OCI-LY7 (cell line): ENCODE measurements at regions of chr12 and their contacts with region 1.

Region 1: DNA sequence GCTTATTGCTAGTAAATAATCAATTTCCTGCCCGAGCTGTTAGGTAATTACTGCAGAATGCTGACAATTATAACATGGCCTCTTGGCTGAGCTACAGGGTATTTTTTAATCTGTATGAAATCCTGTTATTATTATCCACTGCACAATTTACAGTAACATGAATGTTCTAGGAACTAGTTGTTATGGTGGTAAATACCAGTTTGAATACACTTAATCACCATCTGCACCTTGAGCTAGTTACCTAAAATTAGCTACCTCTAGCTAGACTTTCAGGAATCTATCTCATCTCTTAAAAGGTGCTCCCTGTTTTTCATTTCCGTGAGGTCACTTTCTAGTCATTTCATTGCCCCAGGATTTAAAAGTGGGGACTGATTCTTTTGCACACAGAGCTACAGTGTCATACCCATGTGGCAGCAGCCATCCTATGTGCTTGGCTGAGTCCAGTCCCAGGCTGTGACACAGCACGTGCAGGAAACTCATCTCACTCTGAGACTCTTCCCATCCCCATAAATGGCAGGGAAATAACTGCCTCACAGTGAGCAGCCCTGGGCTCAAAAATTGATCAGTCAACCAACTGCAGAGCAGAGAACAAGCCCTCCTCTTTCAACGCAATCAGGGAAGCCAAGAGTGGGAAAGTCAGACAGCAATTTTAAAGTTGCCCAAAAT is 37.6 kb downstream of the DCP1B start:
- DNase-seq: no peak
- H3K4me3 ChIP-seq: no peak overlapping the region
- H3K27ac ChIP-seq: no peak overlapping the region
- H3K4me1 ChIP-seq: no peaks in the 10 kb centered on the region
- CTCF ChIP-seq: no peak

Region 2: DNA sequence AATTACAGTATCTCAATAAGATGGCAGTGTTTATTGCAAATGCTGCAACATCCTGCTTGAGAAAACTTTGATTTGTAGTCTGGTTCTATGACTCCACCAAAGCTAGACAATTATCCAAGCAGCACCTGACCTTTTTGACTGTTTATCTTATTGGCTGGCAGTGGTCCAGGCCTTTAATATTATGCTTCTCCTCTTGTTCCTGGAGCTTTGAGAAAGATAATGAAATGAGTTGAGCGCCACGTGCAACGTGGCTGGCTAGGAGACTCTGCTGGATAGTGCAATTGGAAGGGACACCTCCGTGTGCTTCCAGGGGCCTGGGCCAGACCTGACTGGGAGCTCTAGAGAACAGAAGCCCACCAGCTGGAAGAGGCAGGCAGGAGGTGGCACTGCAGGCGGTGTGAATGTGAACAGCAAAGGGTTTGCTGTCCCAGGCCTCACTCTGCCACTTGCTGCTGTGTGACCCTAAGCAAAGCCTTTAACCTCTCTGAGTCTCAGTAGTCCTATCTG is 435.4 kb after region 1 on chr12:
- CTCF ChIA-PET with region 1: no interaction called
- POLR2A ChIA-PET with region 1: no interaction called
- intact Hi-C with region 1: loop called (anchors 5 kb)
- DNase-seq: no peak
- H3K4me3 ChIP-seq: no peak overlapping the region
- H3K27ac ChIP-seq: no peak overlapping the region
- H3K4me1 ChIP-seq: no peaks in the 10 kb centered on the region
- CTCF ChIP-seq: no peak